IMR-90 (cell line): ENCODE measurements at regions of chrX and their contacts with region 1.

Region 1: DNA sequence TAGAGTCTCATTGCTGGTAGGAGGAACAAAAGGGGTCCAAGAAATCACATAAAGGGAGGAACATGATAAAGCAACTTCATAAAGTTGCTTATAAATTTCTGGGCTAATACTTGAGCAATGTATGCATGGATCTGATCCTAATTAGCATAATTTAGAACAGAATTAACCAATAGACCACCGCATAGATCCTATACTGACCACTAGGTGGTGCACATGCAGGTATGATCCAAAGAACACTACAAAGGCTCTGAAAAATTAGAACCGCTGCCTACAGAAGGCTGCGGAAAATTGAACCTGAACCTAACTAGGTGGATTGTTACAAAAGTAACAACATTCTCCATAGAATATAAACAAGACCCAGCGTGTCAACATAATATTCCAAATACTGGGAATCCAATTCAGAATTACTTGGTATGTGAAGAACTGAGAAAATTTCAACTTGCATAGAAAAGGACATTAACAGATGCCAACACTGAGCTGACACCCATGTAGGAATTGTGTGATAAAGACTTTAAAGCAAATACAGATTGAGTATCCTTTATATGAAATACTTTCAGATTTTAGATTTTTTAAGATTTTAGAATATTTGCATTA is 23.3 kb downstream of the BRCC3 start:
- DNase-seq: peak; percentile 21
- ATAC-seq: peak; percentile 61; the same call in 1 of the 2 replicates
- H3K4me3 ChIP-seq: no peak overlapping the region
- H3K27ac ChIP-seq: no peak overlapping the region
- H3K4me1 ChIP-seq: no peaks in the 10 kb centered on the region
- H3K27me3 ChIP-seq: no peaks in the 10 kb centered on the region
- CTCF ChIP-seq: peak; percentile 54
- POLR2A ChIP-seq: no peak
- RAD21 ChIP-seq: peak; percentile 43

Region 2: GRCh38 chrX:155216179-155216939 is 121.8 kb after region 1 on chrX and contains the start of gene VBP1:
- CTCF ChIA-PET with region 1: no interaction called
- POLR2A ChIA-PET with region 1: no interaction called
- dilution Hi-C with region 1: no loop called
- in situ Hi-C with region 1: no loop called
- intact Hi-C with region 1: loop called (anchors 10 kb)
- DNase-seq: peak; percentile 96
- ATAC-seq: peak; percentile 97
- H3K4me3 ChIP-seq: peak within 1 kb of the TSS; percentile 92
- H3K27ac ChIP-seq: peak within 1 kb of the TSS; percentile 90
- H3K4me1 ChIP-seq: no peaks in the 10 kb centered on the region
- H3K27me3 ChIP-seq: no peaks in the 10 kb centered on the region
- CTCF ChIP-seq: peak; percentile 41
- POLR2A ChIP-seq: peak; percentile 64; the same call in 1 of the 2 replicates
- RAD21 ChIP-seq: no peak
- total RNA-seq, gene VBP1: 42.3 and 75.3 TPM in 2 replicates